Vagina (tissue), 2 donors: ENCODE measurements at regions of chr17 and their contacts with region 1.

Region 1: DNA sequence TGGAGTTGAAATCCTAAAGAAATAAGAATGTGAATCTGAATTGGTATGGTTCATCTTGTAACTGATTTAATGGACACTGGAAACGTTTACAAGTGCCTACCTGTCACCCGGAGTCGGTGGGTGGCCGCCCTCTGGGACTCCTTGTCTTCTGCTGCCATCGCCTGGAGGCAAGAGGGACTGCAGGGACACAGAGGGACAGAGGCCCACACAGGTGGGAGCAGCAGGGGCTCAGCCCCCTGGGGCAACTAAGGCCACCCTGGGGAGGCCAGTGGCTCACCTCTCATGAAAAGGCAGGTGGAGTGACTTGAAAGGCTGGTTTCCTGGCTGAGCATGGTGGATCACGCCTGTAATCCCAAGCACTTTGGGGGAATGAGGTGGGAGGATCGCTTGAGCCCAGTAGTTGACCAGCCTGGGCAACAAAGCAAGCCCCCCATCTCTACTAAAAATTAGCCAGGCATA is 23.2 kb downstream of the TMEM92 start:
- DNase-seq: no peak
- H3K4me3 ChIP-seq: no peak overlapping the region
- H3K27ac ChIP-seq: no peak overlapping the region
- H3K4me1 ChIP-seq: no peaks in the 10 kb centered on the region
- H3K27me3 ChIP-seq: no peaks in the 10 kb centered on the region
- CTCF ChIP-seq: peak; percentile 94 to 99 (median 96)
- POLR2A ChIP-seq: no peak

Region 2: GRCh38 chr17:50114849-50115357 is 182.5 kb before region 1 on chr17:
- intact Hi-C with region 1: loop called (anchors 10 kb)
- DNase-seq: no peak
- H3K4me3 ChIP-seq: no peak overlapping the region
- H3K27ac ChIP-seq: no peak overlapping the region
- H3K4me1 ChIP-seq: peaks cover 36% of the 10 kb centered on the region
- H3K27me3 ChIP-seq: no peaks in the 10 kb centered on the region
- CTCF ChIP-seq: peak in 1 of 3 experiments; percentile 26
- POLR2A ChIP-seq: no peak

Region 3: GRCh38 chr17:50238601-50239280 is 58.7 kb before region 1 on chr17:
- intact Hi-C with region 1: no loop called
- DNase-seq: no peak
- H3K4me3 ChIP-seq: no peak overlapping the region
- H3K27ac ChIP-seq: no peak overlapping the region
- H3K4me1 ChIP-seq: peaks cover 12% of the 10 kb centered on the region
- H3K27me3 ChIP-seq: no peaks in the 10 kb centered on the region
- CTCF ChIP-seq: no peak
- POLR2A ChIP-seq: no peak